PC-9 (cell line): ENCODE measurements at regions of chr9 and their contacts with region 1.

Region 1: GRCh38 chr9:121538246-121538645 is 38.6 kb upstream of the GGTA1 start:
- DNase-seq: peak in 1 of 2 experiments; percentile 34
- H3K4me3 ChIP-seq: no peak overlapping the region
- H3K27ac ChIP-seq: no peak overlapping the region
- H3K4me1 ChIP-seq: no peaks in the 10 kb centered on the region
- H3K27me3 ChIP-seq: 0 out of 2 replicates have a peak, but pooled peaks cover 3% of the 10 kb centered on the region
- CTCF ChIP-seq: no peak; the same call in 1 of the 2 replicates

Region 2: DNA sequence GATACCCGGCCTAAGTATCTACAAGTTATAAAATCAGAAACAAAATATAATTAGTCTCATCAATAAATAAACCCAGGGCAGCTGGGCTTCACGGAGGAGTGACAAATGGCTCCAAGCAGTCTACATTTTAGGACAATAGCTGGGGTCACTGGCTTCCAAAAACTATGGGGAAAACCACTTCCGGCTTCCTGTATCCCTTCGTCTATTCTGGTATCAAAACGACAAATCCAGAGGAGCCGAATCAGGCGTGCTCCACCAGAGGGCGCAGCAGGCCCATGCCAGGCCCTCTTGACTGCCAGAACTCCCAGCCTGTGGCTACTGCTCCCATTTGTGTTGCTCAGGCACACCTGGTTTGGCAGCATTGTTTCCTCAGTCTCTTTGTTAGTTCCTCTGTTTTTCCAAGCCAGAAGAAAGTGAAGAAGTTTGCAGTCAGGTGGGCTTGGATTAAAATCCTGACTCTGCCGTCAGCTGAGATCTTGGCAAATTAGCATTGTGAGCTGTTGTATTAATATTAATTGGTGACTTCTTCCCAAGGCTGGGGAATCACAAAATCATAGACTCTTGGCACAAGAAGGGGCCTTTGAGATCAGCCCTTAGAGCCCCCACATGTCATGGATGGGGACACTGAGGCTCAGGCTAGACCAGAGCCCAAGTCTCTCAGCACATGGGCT is 325.0 kb before region 1 on chr9:
- CTCF ChIA-PET with region 1: no interaction called
- POLR2A ChIA-PET with region 1: no interaction called
- intact Hi-C with region 1: loop called (anchors 2 kb)
- DNase-seq: peak; percentile 78 to 94
- H3K4me3 ChIP-seq: no peak overlapping the region
- H3K27ac ChIP-seq: no peak overlapping the region
- H3K4me1 ChIP-seq: peaks cover 5% of the 10 kb centered on the region; the same call in 1 of the 2 replicates
- H3K27me3 ChIP-seq: no peaks in the 10 kb centered on the region
- CTCF ChIP-seq: peak; percentile 95

Region 3: DNA sequence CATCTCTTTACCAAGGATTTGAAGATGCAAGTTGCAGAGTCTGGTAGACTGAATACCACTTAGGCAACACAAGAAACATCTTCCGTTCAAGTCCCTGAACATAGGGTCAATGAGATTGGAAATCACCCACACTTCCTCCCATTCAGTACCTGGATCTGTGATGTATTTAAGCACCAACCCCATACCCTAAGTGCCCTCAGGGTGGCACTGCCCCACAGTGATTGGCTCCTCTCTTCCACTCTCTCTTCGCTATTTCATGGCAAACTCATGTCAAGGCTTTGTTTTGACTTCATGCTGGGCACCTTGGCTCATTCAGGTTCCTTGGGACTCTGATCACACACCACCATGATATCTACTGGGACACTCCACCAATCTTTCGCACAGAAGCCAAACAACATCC is 92.3 kb before region 1 on chr9:
- CTCF ChIA-PET with region 1: no interaction called
- POLR2A ChIA-PET with region 1: no interaction called
- intact Hi-C with region 1: loop called (anchors 1 kb)
- DNase-seq: peak in 1 of 2 experiments; percentile 27
- H3K4me3 ChIP-seq: no peak overlapping the region
- H3K27ac ChIP-seq: no peak overlapping the region
- H3K4me1 ChIP-seq: no peaks in the 10 kb centered on the region
- H3K27me3 ChIP-seq: peaks cover 85% of the 10 kb centered on the region
- CTCF ChIP-seq: peak; percentile 36

Region 4: GRCh38 chr9:121498150-121498486 is 40.1 kb before region 1 on chr9:
- CTCF ChIA-PET with region 1: interaction called, 3 read pairs
- POLR2A ChIA-PET with region 1: no interaction called
- intact Hi-C with region 1: loop called (anchors 2 kb)
- DNase-seq: peak; percentile 65 to 66
- H3K4me3 ChIP-seq: 0 out of 2 replicates have a peak overlapping the region, but pooled peaks have one; percentile 58
- H3K27ac ChIP-seq: no peak overlapping the region
- H3K4me1 ChIP-seq: peaks cover 16% of the 10 kb centered on the region
- H3K27me3 ChIP-seq: peaks cover 43% of the 10 kb centered on the region
- CTCF ChIP-seq: peak; percentile 72